K562 (cell line): ENCODE measurements at regions of chr1 and their contacts with region 1.

Region 1: GRCh38 chr1:163315773-163316374 is 5.9 kb upstream of the NUF2 start:
- DNase-seq: peak in 3 of 4 experiments; percentile 22 to 57 (median 39)
- ATAC-seq: peak; percentile 71
- H3K4me3 ChIP-seq: no peak overlapping the region
- H3K27ac ChIP-seq: no peak overlapping the region
- H3K4me1 ChIP-seq: no peaks in the 10 kb centered on the region; a peak in 1 of 5 replicates
- H3K27me3 ChIP-seq: no peaks in the 10 kb centered on the region
- CTCF ChIP-seq: peak in 2 of 3 experiments; percentile 54 to 89; a peak in 4 of 6 replicates
- EP300 ChIP-seq: no peak
- POLR2A ChIP-seq: no peak
- RAD21 ChIP-seq: peak; percentile 75 to 78

Region 2: GRCh38 chr1:162847839-162848453 is 467.9 kb before region 1 on chr1:
- CTCF ChIA-PET with region 1: interaction called, 6 read pairs
- POLR2A ChIA-PET with region 1: no interaction called
- in situ Hi-C with region 1: no loop called
- intact Hi-C with region 1: loop called (anchors 2 kb)
- DNase-seq: peak; percentile 69 to 87 (median 78)
- ATAC-seq: peak; percentile 86
- H3K4me3 ChIP-seq: no peak overlapping the region
- H3K27ac ChIP-seq: no peak overlapping the region
- H3K4me1 ChIP-seq: no peaks in the 10 kb centered on the region; a peak in 1 of 5 replicates
- H3K27me3 ChIP-seq: peaks cover 0 to 4% of the 10 kb centered on the region in 2 experiments; a peak in 2 of 5 replicates
- CTCF ChIP-seq: peak; percentile 81 to 94 (median 89)
- EP300 ChIP-seq: no peak
- POLR2A ChIP-seq: no peak
- RAD21 ChIP-seq: peak; percentile 60 to 80

Region 3: DNA sequence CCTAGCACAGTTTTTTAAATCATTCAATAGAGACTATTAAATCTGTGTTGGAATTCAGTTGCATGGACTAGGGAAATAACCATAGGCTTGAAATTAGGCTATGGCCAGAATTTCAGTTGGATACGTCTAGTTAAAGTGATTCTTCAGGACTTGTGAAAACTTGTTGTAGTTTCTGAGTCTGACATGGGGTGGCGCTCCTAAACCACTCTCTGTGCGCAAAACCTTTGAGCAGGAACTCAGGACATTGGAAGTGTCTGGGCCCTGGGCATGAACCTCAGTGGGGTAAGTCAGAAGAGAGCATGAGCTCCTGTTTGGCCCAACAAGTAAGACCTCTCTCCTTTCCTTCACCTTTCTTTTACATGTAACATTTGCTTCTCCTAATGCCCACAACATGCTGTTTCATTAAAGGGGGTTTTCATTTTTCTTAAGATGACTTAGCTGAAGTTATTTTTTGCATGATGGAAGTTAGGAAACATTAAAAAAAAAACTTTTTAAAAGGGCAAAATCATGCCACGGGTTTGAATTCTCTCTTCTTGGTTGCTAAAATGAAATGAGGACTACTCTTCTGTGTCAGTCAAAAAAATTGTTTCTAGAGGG is 437.8 kb before region 1 on chr1:
- CTCF ChIA-PET with region 1: interaction called, 8 read pairs
- POLR2A ChIA-PET with region 1: no interaction called
- in situ Hi-C with region 1: no loop called
- intact Hi-C with region 1: loop called (anchors 1 kb)
- DNase-seq: peak; percentile 36 to 67 (median 40)
- ATAC-seq: peak; percentile 87
- H3K4me3 ChIP-seq: no peak overlapping the region
- H3K27ac ChIP-seq: no peak overlapping the region
- H3K4me1 ChIP-seq: no peaks in the 10 kb centered on the region
- H3K27me3 ChIP-seq: peaks cover 0 to 8% of the 10 kb centered on the region in 2 experiments; a peak in 2 of 5 replicates
- CTCF ChIP-seq: peak; percentile 77 to 88 (median 84)
- EP300 ChIP-seq: no peak
- POLR2A ChIP-seq: no peak
- RAD21 ChIP-seq: peak; percentile 80 to 88

Region 4: GRCh38 chr1:163071405-163072255 is 244.2 kb before region 1 on chr1:
- CTCF ChIA-PET with region 1: interaction called, 7 read pairs
- POLR2A ChIA-PET with region 1: no interaction called
- in situ Hi-C with region 1: no loop called
- intact Hi-C with region 1: loop called (anchors 1 kb)
- DNase-seq: peak; percentile 54 to 61 (median 59)
- ATAC-seq: peak; percentile 88
- H3K4me3 ChIP-seq: no peak overlapping the region
- H3K27ac ChIP-seq: no peak overlapping the region
- H3K4me1 ChIP-seq: no peaks in the 10 kb centered on the region
- H3K27me3 ChIP-seq: no peaks in the 10 kb centered on the region
- CTCF ChIP-seq: peak; percentile 62 to 90 (median 73)
- EP300 ChIP-seq: no peak
- POLR2A ChIP-seq: no peak
- RAD21 ChIP-seq: peak; percentile 25 to 51; a peak in 3 of 4 replicates